CD4-positive, alpha-beta memory T cell (primary cell): ENCODE measurements at regions of chr18 and their contacts with region 1.

Region 1: DNA sequence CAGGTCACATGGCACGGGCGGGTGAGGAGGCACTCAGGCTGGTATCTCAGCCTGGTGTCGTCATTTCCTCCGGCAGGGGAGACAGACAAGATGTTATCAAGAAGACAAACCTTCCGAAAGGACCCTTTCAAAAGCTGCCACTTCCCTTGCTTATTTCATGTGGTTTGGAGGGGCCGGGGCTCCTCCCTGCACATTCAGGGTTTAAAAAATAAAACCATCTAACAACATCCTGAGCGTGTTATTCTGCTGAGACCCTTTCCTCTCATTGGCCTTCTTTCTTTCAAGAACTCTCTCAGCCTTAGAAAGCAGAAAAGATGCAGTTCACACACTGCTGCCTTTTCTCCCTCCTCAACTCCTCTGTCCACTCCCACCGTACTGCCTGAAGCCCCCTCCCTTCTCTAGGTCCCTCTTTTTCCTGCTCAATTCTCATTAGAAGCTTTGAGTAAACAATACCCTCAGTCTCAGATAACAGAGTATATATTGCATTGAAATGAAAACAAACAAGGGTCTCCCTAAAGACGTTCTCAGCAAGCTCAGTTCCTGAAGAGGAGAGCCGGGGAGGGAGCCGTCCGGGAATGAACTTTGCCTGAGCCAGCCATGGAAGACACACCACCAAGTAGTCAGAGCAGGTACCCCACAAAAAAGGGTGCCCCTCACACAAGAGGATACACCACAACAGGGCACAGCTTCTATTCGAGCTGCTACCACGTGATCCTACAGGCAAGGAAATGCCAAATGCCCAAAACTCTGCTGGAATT is 9.7 kb downstream of the SMAD7 start:
- DNase-seq: peak; percentile 93 to 97 (median 94)
- H3K4me3 ChIP-seq: peak overlapping the region; percentile 14 to 18
- H3K4me3 Mint-ChIP-seq: peak overlapping the region; percentile 82 to 94 (median 87)
- H3K27ac ChIP-seq: peak overlapping the region; percentile 49
- H3K27ac Mint-ChIP-seq: peak overlapping the region; percentile 89 to 100 (median 98)
- H3K4me1 ChIP-seq: peaks cover 97% of the 10 kb centered on the region
- H3K4me1 Mint-ChIP-seq: peaks cover 76 to 100% (median 87%) of the 10 kb centered on the region in 4 donors
- H3K27me3 ChIP-seq: no peaks in the 10 kb centered on the region
- H3K27me3 Mint-ChIP-seq: no peaks in the 10 kb centered on the region

Region 2: DNA sequence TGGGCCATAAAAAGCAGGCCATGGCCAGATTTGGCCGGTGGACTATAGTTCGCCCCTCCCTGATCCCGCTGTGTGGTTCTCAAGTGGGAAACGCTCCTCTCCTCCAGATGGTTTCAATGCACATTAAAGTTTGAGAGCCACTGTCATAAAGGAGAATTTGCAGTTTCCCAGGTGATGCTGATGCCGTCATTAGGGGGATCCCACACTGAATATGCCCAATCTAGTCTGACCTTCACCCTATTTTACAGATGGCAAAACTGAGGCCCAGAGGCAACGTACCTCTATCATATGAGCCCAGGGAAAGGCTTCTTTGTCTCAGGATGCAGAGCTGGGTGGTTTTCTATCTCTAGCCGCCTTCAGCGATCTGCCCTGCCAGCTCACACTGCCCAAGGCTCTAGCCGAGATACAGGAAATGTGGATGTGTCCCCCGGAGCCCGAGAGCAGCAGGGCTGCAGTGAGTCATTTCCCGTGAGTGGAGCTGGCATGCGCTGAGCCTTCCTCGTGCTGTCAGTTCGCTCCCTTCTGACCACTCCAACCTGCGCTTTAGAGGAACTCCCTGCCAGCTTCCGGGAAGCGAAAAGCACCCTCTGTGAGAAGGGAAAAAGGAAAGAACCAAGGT is 106.5 kb before region 1 on chr18:
- CTCF ChIA-PET with region 1: no interaction called
- POLR2A ChIA-PET with region 1: interaction called, 17 read pairs
- intact Hi-C with region 1: no loop called
- DNase-seq: peak; percentile 58 to 90 (median 62)
- H3K4me3 ChIP-seq: peak overlapping the region; percentile 42 to 54
- H3K4me3 Mint-ChIP-seq: peak overlapping the region; percentile 81 to 98 (median 90)
- H3K27ac ChIP-seq: peak overlapping the region; percentile 74
- H3K27ac Mint-ChIP-seq: peak overlapping the region; percentile 90 to 97 (median 96)
- H3K4me1 ChIP-seq: peaks cover 100% of the 10 kb centered on the region
- H3K4me1 Mint-ChIP-seq: peaks cover 59 to 100% (median 79%) of the 10 kb centered on the region in 4 donors
- H3K27me3 ChIP-seq: no peaks in the 10 kb centered on the region
- H3K27me3 Mint-ChIP-seq: no peaks in the 10 kb centered on the region

Region 3: GRCh38 chr18:48922801-48923730 is 18.0 kb before region 1 on chr18:
- CTCF ChIA-PET with region 1: interaction called, 3 read pairs
- POLR2A ChIA-PET with region 1: interaction called, 118 read pairs
- intact Hi-C with region 1: loop called (anchors 1 kb)
- DNase-seq: peak in 1 of 5 donors; percentile 51
- H3K4me3 ChIP-seq: peak overlapping the region in 1 of 2 donors; percentile 13
- H3K4me3 Mint-ChIP-seq: peak overlapping the region; percentile 77 to 94 (median 82)
- H3K27ac ChIP-seq: no peak overlapping the region
- H3K27ac Mint-ChIP-seq: peak overlapping the region; percentile 71 to 91 (median 86)
- H3K4me1 ChIP-seq: peaks cover 64% of the 10 kb centered on the region
- H3K4me1 Mint-ChIP-seq: peaks cover 45 to 74% (median 61%) of the 10 kb centered on the region in 4 donors
- H3K27me3 ChIP-seq: no peaks in the 10 kb centered on the region
- H3K27me3 Mint-ChIP-seq: no peaks in the 10 kb centered on the region

Region 4: DNA sequence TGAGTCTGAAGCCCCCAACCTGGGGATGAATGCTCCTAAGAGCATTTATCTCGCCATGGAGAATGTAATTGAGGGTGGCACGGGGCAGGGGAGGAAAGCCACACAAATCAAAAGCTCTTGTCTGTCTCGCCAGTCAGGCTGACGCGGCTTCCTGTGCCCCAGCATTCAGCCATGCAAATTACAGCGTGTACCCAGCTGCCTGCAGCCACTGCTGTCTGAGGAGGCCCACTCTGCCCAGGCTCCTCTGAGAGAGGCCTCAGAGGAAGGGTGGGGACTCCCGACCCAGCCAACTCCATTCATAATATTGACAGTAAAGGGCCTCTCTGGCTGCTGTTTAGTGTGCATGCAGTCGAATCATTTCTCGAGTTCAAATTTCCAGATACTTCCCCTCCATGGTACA is 12.2 kb before region 1 on chr18:
- CTCF ChIA-PET with region 1: interaction called, 3 read pairs
- POLR2A ChIA-PET with region 1: interaction called, 118 read pairs
- intact Hi-C with region 1: loop called (anchors 1 kb)
- DNase-seq: peak; percentile 72 to 89 (median 76)
- H3K4me3 ChIP-seq: peak overlapping the region; percentile 13 to 15
- H3K4me3 Mint-ChIP-seq: peak overlapping the region; percentile 50 to 94 (median 74)
- H3K27ac ChIP-seq: peak overlapping the region; percentile 3
- H3K27ac Mint-ChIP-seq: peak overlapping the region; percentile 86 to 97 (median 95)
- H3K4me1 ChIP-seq: peaks cover 97% of the 10 kb centered on the region
- H3K4me1 Mint-ChIP-seq: peaks cover 66 to 99% (median 84%) of the 10 kb centered on the region in 4 donors
- H3K27me3 ChIP-seq: no peaks in the 10 kb centered on the region
- H3K27me3 Mint-ChIP-seq: peaks cover 0 to 1% of the 10 kb centered on the region in 2 donors